ENCODE measurements at regions of chr22 and their contacts with region 1.

Region 1: DNA sequence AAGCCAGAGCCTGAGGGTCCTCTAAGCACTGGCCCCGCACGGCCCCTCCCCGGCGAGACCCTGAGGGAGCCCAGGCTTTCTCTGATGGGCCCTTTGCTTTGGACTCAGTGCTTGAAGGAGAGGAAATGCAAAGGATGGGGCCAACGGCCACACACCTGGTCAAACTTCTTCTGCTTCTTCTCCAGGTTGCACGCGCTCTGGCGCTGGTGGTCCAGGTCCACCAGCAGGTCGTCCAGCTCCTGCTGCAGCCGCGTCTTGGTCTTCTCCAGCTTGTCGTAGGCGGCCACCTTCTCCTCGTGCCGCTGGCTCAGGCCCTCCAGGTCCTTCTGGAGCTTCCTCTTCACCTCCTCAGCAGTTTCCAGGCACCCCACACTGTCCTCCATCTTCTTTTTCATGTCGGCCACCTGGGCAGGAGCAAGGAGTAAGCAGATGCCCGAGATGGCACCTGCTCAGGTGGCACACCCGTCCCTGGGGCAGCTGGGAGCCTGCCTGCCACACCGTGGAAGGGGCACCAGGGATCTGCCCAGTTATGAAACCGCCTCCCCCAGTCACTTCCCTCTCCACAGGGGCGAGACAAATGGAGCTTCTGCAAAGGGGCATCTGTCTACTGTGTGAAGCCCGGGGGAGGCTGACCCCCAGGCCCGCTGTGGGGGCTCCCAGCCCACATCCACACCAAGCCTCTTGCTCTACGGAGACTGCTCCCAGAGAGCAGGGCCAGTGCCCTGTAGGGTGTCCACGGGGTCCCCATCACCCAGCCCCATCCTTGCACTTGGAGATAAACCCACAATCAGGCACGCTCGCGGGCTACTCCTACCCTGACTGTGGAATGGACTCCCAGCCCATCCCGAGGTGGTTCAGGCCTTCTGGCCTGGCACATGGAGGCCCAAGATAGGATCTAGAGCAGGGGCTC is 39.2 kb downstream of the APOL1 start:
- DNase-seq: no peak
- H3K4me3 ChIP-seq: no peak overlapping the region
- H3K27me3 ChIP-seq: no peaks in the 10 kb centered on the region
- CTCF ChIP-seq: no peak

Region 2: DNA sequence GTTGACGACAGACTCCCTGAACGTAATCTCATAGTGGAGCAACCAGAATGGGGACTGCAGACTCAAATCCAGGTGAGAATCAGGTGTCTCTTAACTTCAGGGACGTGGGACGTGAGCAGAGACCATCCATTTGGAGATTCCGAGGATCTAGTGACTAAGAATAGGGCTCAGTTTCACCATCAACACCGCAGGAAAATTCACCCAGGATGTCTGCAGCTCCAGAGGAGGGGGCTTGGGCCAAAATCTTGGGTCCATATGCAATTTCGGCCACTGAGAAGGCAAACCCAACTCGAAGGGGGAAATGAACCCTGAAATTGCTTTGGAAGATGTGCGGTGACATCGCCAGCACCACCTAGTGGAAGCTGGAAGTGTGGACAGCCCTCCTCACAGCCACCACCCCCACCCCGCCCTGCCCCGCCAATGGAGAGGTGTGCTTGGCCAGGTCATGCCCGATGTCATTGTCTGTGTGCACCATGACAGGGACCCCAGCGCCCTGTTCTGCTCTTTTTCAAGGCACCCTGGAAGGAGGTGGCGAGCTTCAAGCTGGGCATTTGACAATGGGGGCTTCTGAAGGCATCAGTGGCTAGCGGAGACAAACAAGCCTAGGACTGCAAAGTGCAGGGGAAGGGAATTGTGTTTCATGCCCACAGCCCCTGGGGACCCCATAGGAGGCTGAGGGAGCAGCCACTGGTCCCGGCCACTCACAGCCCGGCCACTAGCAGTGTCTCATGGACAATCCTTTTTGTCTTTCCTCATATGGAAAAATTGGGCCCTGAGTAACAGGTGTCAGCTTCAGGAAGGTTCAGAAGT is 14.4 kb before region 1 on chr22:
- CTCF ChIA-PET with region 1: interaction called, 21 read pairs
- POLR2A ChIA-PET with region 1: no interaction called
- DNase-seq: no peak
- H3K4me3 ChIP-seq: no peak overlapping the region
- H3K27me3 ChIP-seq: no peaks in the 10 kb centered on the region
- CTCF ChIP-seq: peak; percentile 86

Region 3: GRCh38 chr22:36325154-36326031 is 33.3 kb after region 1 on chr22:
- CTCF ChIA-PET with region 1: no interaction called
- POLR2A ChIA-PET with region 1: no interaction called
- DNase-seq: peak; percentile 66
- H3K4me3 ChIP-seq: no peak overlapping the region
- H3K27me3 ChIP-seq: no peaks in the 10 kb centered on the region
- CTCF ChIP-seq: no peak

Region 4: GRCh38 chr22:36684841-36685240 is 392.8 kb after region 1 on chr22:
- CTCF ChIA-PET with region 1: no interaction called
- POLR2A ChIA-PET with region 1: no interaction called
- DNase-seq: no peak
- H3K4me3 ChIP-seq: no peak overlapping the region
- H3K27me3 ChIP-seq: peaks cover 12% of the 10 kb centered on the region
- CTCF ChIP-seq: no peak

Measured in BJ (cell line).